Gastrocnemius medialis (tissue), 4 donors: ENCODE measurements at regions of chr12 and their contacts with region 1.

Region 1: DNA sequence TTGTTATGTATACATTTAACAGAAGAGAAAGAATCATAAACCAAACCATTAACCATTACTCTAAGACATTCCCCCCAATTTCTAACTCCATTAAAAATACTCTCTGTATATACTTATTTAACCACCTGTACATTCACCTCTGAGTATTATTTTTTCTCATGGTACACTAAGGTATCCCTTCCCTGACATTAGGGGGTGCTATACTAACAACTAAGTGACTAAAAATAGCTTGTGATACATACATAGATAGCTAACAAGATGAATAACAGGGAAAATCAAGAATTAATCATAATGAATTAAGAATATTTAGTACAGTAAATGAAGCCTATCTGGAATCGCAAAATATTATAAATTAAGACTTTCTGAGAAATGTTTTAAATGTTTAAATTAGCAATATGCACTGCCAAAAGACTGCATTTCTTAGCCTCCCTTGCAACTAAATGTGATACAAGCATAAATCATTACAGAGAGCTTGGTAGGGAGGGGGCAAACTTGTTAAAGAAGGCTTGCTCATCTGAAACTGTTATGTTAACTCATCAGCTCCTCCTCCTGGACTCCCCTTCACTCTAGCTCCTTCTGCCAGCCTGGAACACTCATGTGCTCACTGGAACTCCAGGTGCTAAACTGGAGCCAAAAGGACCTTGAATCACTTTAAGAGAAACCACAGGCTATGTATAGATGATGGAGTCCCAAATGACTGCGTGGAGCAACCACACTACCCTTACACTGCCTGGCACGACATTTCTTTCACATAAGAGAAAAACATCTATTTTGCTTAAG is 14.9 kb downstream of the C2CD5 start:
- DNase-seq: no peak
- ATAC-seq: peak; percentile 70 to 81
- H3K4me3 ChIP-seq: no peak overlapping the region
- H3K27ac ChIP-seq: no peak overlapping the region
- H3K4me1 ChIP-seq: no peaks in the 10 kb centered on the region
- H3K27me3 ChIP-seq: no peaks in the 10 kb centered on the region
- CTCF ChIP-seq: peak in 4 of 5 experiments; percentile 20 to 53 (median 40)
- POLR2A ChIP-seq: no peak

Region 2: GRCh38 chr12:22518067-22518719 is 11.3 kb before region 1 on chr12:
- in situ Hi-C with region 1: no loop called
- intact Hi-C with region 1: no loop called
- DNase-seq: no peak
- ATAC-seq: no peak
- H3K4me3 ChIP-seq: no peak overlapping the region
- H3K27ac ChIP-seq: no peak overlapping the region
- H3K4me1 ChIP-seq: no peaks in the 10 kb centered on the region
- H3K27me3 ChIP-seq: no peaks in the 10 kb centered on the region
- CTCF ChIP-seq: no peak
- POLR2A ChIP-seq: no peak

Region 3: GRCh38 chr12:22670762-22671161 is 141.3 kb after region 1 on chr12:
- in situ Hi-C with region 1: no loop called
- intact Hi-C with region 1: loop called (anchors 2 kb)
- DNase-seq: no peak
- ATAC-seq: no peak
- H3K4me3 ChIP-seq: no peak overlapping the region
- H3K27ac ChIP-seq: no peak overlapping the region
- H3K4me1 ChIP-seq: no peaks in the 10 kb centered on the region
- H3K27me3 ChIP-seq: no peaks in the 10 kb centered on the region
- CTCF ChIP-seq: no peak
- POLR2A ChIP-seq: no peak